Activated CD4-positive, alpha-beta T cell treated with anti-CD3 and anti-CD28 coated beads, Interleukin-2, amount 10 ng/mL, durations not matched to agents 24 days and 14 days (primary cell): ENCODE measurements at regions of chr7 and their contacts with region 1.

Region 1: DNA sequence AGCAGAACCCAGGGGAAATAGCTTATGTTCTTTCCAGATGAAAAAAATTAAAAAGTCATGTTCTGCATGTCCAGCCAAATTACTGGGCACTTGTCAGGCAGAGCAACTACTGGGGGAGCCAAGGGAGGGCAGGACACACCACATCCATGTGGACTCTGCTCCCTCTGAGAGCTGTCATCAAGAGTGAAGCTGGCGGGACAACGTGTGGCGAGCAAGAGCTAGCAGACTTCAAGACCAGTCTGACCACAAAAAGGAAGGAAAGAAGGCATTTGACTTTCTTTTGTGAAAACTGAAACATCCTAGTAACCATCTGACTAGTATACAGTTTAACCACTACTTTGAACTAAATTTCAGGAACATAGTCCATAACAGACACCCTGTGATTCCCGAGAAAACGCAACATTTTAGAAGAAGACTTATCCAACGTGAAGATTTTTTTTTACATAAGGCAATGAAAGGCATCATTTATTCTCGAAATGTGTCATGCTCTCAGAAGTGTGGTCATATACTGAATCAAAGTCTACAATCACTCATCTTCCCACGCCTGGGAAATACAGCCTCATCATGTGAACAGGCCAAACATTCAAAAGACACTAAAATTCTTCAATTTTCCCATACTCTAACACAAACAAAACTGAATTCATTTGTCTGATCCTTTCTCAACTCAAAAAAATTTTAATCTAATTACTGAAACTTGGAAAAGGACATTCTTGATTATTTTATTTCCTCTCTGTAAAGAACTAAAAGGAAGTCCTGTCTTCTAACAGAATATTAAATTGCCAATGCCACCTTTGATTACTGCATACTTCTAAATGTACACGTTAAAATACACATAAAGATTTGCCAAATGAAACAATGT is 15.5 kb downstream of the CYTH3 start:
- DNase-seq: no peak
- H3K4me3 Mint-ChIP-seq: no peak overlapping the region
- H3K27ac Mint-ChIP-seq: peak overlapping the region; percentile 10
- H3K4me1 Mint-ChIP-seq: peaks cover 18% of the 10 kb centered on the region
- H3K27me3 Mint-ChIP-seq: peaks cover 65% of the 10 kb centered on the region

Region 2: DNA sequence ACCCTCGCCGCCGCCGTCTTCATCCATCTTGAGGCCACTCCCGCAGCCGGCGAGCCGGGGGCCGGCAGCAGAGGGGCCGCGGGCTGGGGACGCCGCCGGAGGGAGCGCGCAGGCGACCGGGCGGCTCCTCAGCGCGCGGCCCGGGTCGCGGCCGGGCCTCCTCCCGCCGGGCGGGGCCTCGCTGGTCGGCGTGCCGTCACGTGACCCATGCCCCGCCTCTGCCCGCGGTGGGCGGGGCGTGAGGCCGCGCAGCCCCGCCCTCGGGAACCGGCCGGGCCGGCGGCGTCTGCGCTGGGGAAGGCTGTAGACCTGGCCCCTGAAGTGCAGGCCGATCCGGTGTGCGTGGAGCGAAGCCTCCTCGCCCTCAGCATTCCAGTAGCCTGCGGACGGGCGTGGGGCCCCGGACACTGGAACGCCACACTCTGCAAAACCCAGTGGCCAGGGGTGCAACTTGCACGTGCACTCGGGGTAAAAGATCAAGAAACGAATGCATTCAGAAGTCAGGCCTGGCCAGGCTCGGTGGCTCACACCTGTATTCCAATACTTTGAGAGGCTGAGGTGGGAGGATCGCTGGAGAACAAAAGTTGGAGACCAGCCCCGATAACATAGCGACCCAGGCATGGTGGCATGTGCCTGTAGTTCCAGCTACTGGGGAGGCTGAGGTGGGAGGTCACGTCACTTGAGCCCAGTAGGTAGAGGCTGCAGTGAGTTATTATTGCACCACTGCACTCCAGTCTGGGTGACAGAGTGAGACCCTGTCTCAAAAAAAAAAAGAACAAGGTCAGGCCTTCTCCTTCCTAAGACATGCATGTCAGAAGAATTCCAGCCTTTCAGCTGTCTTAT is 15.8 kb after region 1 on chr7 and contains the start of gene CYTH3:
- intact Hi-C with region 1: loop called (anchors 2 kb)
- DNase-seq: peak; percentile 96
- H3K4me3 Mint-ChIP-seq: peak within 1 kb of the TSS; percentile 82
- H3K27ac Mint-ChIP-seq: peak within 1 kb of the TSS; percentile 28
- H3K4me1 Mint-ChIP-seq: peaks cover 15% of the 10 kb centered on the region
- H3K27me3 Mint-ChIP-seq: peaks cover 62% of the 10 kb centered on the region
- total RNA-seq, gene CYTH3: 0.65 and 1.3 TPM in 2 replicates